GM10248 (cell line): ENCODE measurements at regions of chr12 and their contacts with region 1.

Region 1: GRCh38 chr12:104958009-104958945 is at the start of gene SLC41A2:
- DNase-seq: peak; percentile 93
- CTCF ChIP-seq: peak; percentile 15

Region 2: DNA sequence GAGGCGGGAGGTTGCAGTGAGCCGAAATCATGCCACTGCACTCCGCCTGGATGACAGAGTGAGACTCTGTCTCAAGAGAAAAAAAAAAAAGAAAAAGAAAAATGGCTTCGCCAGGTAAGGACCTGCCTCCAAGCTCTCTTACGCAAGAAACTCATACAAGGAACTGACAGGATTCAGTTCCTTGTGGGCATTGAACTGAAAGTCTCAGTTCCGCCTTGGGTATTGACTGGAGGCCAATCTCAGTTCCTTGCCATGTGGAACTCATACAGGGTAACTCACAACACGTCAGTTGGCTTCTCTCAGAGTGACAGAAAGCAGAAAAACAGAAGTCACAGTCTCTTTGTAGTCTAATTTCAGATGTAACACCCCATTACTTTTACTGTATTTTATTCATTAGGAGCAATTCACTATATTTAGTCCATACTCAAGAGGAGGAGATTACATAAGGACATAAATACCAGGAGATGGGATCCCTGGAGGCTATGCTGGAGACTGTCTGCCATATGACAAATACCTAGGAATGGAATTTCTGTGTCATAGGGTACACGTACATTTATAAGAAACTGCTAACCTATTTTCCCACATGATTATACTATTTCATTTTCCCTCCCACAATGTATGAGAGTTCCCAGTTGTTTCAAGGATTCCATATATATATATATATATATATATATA is 16.5 kb after region 1 on chr12:
- CTCF ChIA-PET with region 1: interaction called, 10 read pairs
- POLR2A ChIA-PET with region 1: interaction called, 3 read pairs
- DNase-seq: peak; percentile 63
- CTCF ChIP-seq: no peak

Region 3: DNA sequence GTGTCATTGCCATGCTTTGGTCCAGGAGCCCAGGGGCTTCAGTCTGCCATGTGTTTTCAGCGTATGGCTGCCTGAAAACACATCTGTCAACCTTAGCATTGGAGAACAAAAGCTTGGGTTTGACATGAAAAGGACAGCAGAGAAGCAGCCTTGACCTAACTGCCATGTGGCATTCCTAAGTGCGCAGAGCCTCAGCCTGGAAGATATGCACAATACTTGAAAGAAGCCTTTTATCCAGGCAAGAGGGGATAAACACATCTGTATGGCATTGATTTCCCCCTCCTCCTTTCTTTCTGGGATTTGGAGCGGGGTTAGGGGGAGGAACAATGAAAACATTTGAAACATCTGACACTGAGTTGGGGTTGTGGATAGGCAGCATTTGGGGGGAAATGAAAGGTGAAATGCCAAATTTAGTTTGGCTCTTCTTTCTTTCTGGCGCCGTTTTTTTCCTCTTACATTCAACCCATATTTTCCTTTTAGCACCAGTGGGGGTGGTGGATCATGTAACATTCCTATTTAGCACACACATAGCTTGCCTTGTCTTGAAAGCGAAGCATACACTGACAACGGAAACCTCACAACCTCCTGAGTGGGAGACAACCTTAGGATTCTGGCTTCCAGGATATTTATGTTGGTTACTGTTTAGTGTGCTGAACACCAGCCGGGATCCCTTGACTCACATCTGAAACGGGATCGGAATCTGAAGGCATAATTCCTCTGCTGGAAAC is 549.2 kb after region 1 on chr12:
- CTCF ChIA-PET with region 1: no interaction called
- POLR2A ChIA-PET with region 1: no interaction called
- DNase-seq: no peak
- CTCF ChIP-seq: no peak